CD4-positive, alpha-beta T cell (primary cell): ENCODE measurements at regions of chr10 and their contacts with region 1.

Region 1: DNA sequence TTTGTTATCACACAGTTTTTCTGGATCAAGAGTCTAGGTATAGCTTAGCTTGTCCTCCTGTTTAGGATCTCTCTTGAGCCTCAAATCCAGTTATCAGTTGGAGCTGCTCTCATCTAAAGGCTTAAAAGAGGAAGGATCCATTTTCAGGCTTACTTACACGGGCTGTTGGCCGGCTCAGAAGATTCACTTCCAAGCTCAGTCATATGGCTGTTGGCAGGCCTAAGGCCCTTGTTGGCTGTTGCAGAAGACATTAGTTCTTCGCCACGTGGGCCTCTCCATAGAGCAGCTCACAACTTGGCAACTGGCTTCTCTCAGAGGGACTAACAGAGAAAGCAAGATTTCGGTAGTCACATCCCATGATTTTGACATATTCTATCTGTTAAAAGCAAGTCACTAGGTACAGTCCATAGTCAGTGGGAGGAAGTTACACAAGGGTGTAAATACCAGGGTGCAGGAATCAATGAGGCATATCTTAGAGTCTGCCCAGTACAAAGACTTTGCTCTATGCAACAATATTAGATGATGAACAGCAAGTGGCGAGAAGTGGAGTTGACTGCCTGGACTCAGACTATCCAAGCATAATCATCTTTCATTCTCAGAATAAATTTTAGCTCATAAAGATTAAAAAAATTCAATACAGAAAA is 280.1 kb upstream of the MBL2 start:
- DNase-seq: no peak
- ATAC-seq: no peak
- H3K4me3 ChIP-seq: no peak overlapping the region
- H3K4me3 Mint-ChIP-seq: no peak overlapping the region
- H3K27ac ChIP-seq: no peak overlapping the region
- H3K27ac Mint-ChIP-seq: no peak overlapping the region
- H3K4me1 ChIP-seq: no peaks in the 10 kb centered on the region
- H3K4me1 Mint-ChIP-seq: no peaks in the 10 kb centered on the region
- H3K27me3 ChIP-seq: no peaks in the 10 kb centered on the region
- H3K27me3 Mint-ChIP-seq: no peaks in the 10 kb centered on the region
- CTCF ChIP-seq: no peak

Region 2: GRCh38 chr10:52637592-52637991 is 415.1 kb before region 1 on chr10:
- CTCF ChIA-PET with region 1: no interaction called
- POLR2A ChIA-PET with region 1: no interaction called
- intact Hi-C with region 1: no loop called
- DNase-seq: no peak
- ATAC-seq: no peak
- H3K4me3 ChIP-seq: no peak overlapping the region
- H3K4me3 Mint-ChIP-seq: no peak overlapping the region
- H3K27ac ChIP-seq: no peak overlapping the region
- H3K27ac Mint-ChIP-seq: no peak overlapping the region
- H3K4me1 ChIP-seq: no peaks in the 10 kb centered on the region
- H3K4me1 Mint-ChIP-seq: no peaks in the 10 kb centered on the region
- H3K27me3 ChIP-seq: no peaks in the 10 kb centered on the region
- H3K27me3 Mint-ChIP-seq: no peaks in the 10 kb centered on the region
- CTCF ChIP-seq: no peak

Region 3: GRCh38 chr10:53064614-53065013 is 12.0 kb after region 1 on chr10:
- CTCF ChIA-PET with region 1: no interaction called
- POLR2A ChIA-PET with region 1: no interaction called
- intact Hi-C with region 1: loop called in 1 of 2 experiments (anchors 1 kb)
- DNase-seq: no peak
- ATAC-seq: no peak
- H3K4me3 ChIP-seq: no peak overlapping the region
- H3K4me3 Mint-ChIP-seq: no peak overlapping the region
- H3K27ac ChIP-seq: no peak overlapping the region
- H3K27ac Mint-ChIP-seq: no peak overlapping the region
- H3K4me1 ChIP-seq: no peaks in the 10 kb centered on the region
- H3K4me1 Mint-ChIP-seq: no peaks in the 10 kb centered on the region
- H3K27me3 ChIP-seq: no peaks in the 10 kb centered on the region
- H3K27me3 Mint-ChIP-seq: no peaks in the 10 kb centered on the region
- CTCF ChIP-seq: no peak